ENCODE measurements at regions of chr9 and their contacts with region 1.

Region 1: DNA sequence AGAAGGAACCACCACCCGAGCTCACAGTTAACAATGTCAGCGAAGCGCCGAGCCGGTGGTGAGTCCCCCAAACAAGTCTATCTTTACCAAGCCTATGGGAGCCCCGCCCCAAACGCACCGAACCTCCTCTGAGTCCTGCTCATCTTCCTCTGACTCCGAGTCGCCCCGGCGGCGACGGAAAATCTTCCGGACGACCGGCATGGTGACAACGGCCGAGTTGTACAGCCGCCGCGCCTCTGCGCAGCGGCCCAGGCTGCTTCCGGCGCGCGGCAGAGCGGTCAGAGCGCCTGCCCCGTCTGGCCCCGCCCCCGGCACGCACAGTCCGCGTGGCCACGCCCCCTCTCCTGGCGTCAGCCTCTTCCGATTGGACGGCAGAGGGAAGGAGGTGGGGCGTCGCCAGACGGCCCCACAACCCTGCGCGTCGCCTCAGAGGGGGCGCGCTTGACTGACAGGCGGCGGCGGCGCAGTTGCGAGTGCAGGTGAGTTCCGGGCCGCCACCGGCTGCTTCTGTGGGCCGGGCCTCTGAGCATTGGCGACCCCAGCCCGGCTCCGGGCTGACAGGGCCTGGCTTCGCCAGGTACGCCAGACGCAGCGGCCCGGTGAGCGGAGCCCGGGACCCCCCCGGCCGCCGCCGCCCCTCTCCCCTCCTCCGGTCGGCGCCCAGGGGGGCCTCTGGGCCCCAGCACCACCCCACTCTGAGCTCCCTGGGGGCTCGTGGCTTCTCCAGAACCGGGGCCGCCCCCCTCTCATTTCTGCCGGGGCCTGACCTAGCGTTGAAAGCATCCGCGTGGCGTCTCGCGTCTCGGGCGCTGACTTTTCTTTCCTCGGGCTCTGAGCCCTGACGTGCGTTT is at the starts of genes C9orf78 and USP20:
- DNase-seq: peak; percentile 94 to 97 (median 97)
- H3K4me3 ChIP-seq: peak within 1 kb of the TSS; percentile 74 to 100 (median 92)
- H3K27ac ChIP-seq: peak within 1 kb of the TSS; percentile 77 to 91
- H3K4me1 ChIP-seq: peaks cover 6 to 53% (median 44%) of the 10 kb centered on the region in 4 experiments
- H3K27me3 ChIP-seq: no peaks in the 10 kb centered on the region

Region 2: DNA sequence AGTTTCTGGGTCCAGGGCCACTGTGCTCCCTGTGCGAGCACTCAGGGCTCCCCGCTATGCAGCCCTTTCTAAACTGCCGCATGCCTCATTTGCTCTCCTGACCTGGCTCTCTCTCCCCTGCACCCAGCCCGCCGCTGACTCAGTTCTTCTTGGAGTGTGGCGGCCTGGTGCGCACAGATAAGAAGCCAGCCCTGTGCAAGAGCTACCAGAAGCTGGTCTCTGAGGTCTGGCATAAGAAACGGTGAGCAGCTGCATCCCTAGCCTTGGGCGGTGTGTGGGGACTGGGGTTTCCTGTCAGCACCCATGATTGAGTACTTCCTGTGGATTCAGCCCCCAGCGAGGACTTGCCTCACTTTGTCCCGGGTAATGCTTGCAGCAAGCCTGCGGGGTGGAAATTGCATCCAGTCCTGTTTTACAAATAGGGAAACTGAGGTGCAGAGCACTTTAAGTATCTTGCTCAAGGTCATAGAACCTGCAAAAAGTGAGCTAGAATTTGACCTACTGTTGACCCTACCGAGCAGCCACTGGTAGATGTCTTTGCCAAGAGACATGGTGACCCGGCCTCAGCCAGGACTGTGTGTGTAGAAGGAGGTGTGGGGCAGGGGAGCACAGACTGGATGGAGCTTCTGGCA is 27.9 kb after region 1 on chr9:
- CTCF ChIA-PET with region 1: interaction called, 5 read pairs
- POLR2A ChIA-PET with region 1: interaction called, 10 read pairs
- DNase-seq: peak; percentile 98 to 100 (median 100)
- H3K4me3 ChIP-seq: peak overlapping the region in 3 of 7 experiments; percentile 26 to 62 (median 38)
- H3K27ac ChIP-seq: peak overlapping the region in 1 of 2 experiments; percentile 71
- H3K4me1 ChIP-seq: peaks cover 11 to 71% (median 49%) of the 10 kb centered on the region in 4 experiments
- H3K27me3 ChIP-seq: no peaks in the 10 kb centered on the region